SK-N-SH (cell line): ENCODE measurements at regions of chr7 and their contacts with region 1.

Region 1: GRCh38 chr7:133742709-133743538 is 384.2 kb upstream of the LRGUK start:
- DNase-seq: peak; percentile 36
- H3K4me3 ChIP-seq: no peak overlapping the region
- H3K27ac ChIP-seq: peak overlapping the region; percentile 10 to 100; a peak in 3 of 4 replicates
- H3K4me1 ChIP-seq: peaks cover 14 to 80% of the 10 kb centered on the region in 2 experiments; a peak in 3 of 4 replicates
- H3K27me3 ChIP-seq: no peaks in the 10 kb centered on the region
- CTCF ChIP-seq: peak; percentile 95
- EP300 ChIP-seq: peak; percentile 49 to 89; a peak in 3 of 4 replicates
- RAD21 ChIP-seq: peak; percentile 95

Region 2: GRCh38 chr7:133009426-133010252 is 733.3 kb before region 1 on chr7:
- CTCF ChIA-PET with region 1: no interaction called
- POLR2A ChIA-PET with region 1: no interaction called
- DNase-seq: no peak
- H3K4me3 ChIP-seq: no peak overlapping the region
- H3K27ac ChIP-seq: no peak overlapping the region
- H3K4me1 ChIP-seq: peaks cover 4 to 9% of the 10 kb centered on the region in 2 experiments; a peak in 3 of 4 replicates
- H3K27me3 ChIP-seq: no peaks in the 10 kb centered on the region
- CTCF ChIP-seq: no peak
- EP300 ChIP-seq: no peak
- RAD21 ChIP-seq: no peak

Region 3: GRCh38 chr7:133542209-133542780 is 200.6 kb before region 1 on chr7:
- CTCF ChIA-PET with region 1: interaction called, 10 read pairs
- POLR2A ChIA-PET with region 1: no interaction called
- DNase-seq: no peak
- H3K4me3 ChIP-seq: no peak overlapping the region
- H3K27ac ChIP-seq: peak overlapping the region in 1 of 2 experiments; percentile 97; a peak in 2 of 4 replicates
- H3K4me1 ChIP-seq: peaks cover 3 to 48% of the 10 kb centered on the region in 2 experiments; a peak in 3 of 4 replicates
- H3K27me3 ChIP-seq: no peaks in the 10 kb centered on the region
- CTCF ChIP-seq: no peak
- EP300 ChIP-seq: no peak
- RAD21 ChIP-seq: no peak

Region 4: DNA sequence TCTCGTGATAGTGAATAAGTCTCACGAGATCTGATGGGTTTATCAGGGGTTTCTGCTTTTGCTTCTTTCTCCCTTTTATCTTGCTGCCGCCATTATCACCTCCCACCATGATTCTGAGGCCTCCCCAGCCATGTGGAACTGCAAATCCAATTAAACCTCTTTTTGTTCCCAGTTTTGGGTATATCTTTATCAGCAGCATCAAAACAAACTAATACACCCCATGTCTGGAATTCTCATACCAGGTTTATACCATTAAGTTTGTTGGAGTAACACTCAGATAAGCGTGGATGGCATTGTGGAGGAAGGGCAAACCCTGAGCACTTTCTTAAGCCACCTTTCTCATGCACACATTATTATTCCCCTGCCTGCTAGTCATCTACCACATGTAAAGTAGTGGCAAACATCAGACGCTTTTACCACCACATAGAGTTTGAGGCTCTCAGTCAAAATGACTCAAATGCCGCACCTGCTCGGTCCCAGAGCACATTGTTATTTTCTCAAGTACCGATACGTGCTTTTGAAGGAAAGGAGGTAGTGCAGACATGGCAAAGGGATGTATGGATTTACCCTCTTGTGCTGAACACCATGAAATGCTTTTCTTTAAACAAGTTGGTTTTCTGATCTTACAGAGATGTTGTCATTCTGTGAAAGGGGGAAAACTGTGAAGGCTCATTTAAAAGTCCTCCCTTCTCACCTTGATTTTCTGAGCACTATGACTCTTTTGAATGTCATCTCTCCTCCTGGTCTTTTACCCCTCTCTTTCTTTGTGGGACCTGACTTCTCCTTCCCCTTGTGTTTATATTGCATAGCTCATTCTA is 60.4 kb before region 1 on chr7:
- CTCF ChIA-PET with region 1: interaction called, 15 read pairs
- POLR2A ChIA-PET with region 1: no interaction called
- DNase-seq: no peak
- H3K4me3 ChIP-seq: no peak overlapping the region
- H3K27ac ChIP-seq: peak overlapping the region in 1 of 2 experiments; percentile 94; a peak in 2 of 4 replicates
- H3K4me1 ChIP-seq: peaks cover 0 to 35% of the 10 kb centered on the region in 2 experiments; a peak in 2 of 4 replicates
- H3K27me3 ChIP-seq: no peaks in the 10 kb centered on the region
- CTCF ChIP-seq: no peak
- EP300 ChIP-seq: peak in 1 of 2 experiments; percentile 81; a peak in 2 of 4 replicates
- RAD21 ChIP-seq: peak; percentile 5; the same call in 1 of the 2 replicates

Region 5: DNA sequence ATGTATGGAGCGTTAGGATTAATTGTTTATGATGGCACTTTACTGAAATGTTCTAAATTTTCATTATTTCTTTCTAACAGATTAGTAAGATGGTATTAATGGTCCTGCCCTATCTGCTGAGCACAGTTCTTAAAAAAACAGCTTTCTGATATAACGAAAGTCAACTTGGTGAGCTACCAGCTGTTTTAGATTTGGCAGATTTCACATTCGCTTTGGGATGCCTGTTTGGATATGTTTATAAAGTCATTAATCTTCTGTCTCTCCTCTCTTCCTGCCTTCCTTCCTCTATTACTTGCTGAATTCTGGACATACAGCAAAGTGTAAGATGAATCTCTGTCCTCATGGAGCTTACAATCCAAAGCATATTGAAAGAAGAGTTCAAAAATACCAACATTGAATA is 12.6 kb before region 1 on chr7:
- CTCF ChIA-PET with region 1: interaction called, 30 read pairs
- POLR2A ChIA-PET with region 1: no interaction called
- DNase-seq: no peak
- H3K4me3 ChIP-seq: no peak overlapping the region
- H3K27ac ChIP-seq: peak overlapping the region in 1 of 2 experiments; percentile 93; a peak in 2 of 4 replicates
- H3K4me1 ChIP-seq: peaks cover 0 to 13% of the 10 kb centered on the region in 2 experiments; a peak in 2 of 4 replicates
- H3K27me3 ChIP-seq: no peaks in the 10 kb centered on the region
- CTCF ChIP-seq: no peak
- EP300 ChIP-seq: peak in 1 of 2 experiments; percentile 55; a peak in 1 of 4 replicates
- RAD21 ChIP-seq: no peak; the same call in 1 of the 2 replicates

Region 6: DNA sequence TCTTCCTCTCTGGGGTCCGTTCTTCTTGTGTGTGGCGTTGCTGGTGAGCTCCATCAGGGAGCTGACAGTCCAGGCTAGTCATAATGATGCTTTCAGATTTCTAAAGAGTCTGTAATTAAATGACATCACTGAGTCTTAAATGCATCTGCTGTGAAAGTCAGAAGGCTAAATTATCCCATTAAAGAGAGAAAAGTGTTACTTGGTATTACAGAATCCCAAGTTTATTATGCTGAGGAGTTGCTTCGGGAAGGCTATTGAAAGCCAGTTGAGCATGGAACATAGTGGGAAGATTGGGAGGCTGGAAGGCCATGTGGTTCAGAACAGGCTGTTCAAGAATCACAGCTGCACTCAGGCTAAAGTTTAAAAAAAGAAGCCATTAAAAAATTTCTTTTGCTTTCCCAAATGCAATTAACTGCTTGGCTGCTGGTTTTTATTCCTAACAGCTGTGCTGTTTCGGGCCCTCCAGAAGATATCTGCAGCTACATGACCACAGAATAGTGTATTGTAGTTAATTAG is 41.6 kb after region 1 on chr7:
- CTCF ChIA-PET with region 1: interaction called, 48 read pairs
- POLR2A ChIA-PET with region 1: interaction called, 23 read pairs
- DNase-seq: peak; percentile 66
- H3K4me3 ChIP-seq: no peak overlapping the region
- H3K27ac ChIP-seq: peak overlapping the region in 1 of 2 experiments; percentile 100; a peak in 3 of 4 replicates
- H3K4me1 ChIP-seq: peaks cover 0 to 57% of the 10 kb centered on the region in 2 experiments; a peak in 2 of 4 replicates
- H3K27me3 ChIP-seq: no peaks in the 10 kb centered on the region
- CTCF ChIP-seq: no peak
- EP300 ChIP-seq: peak in 1 of 2 experiments; percentile 99; a peak in 2 of 4 replicates
- RAD21 ChIP-seq: peak; percentile 54

Region 7: DNA sequence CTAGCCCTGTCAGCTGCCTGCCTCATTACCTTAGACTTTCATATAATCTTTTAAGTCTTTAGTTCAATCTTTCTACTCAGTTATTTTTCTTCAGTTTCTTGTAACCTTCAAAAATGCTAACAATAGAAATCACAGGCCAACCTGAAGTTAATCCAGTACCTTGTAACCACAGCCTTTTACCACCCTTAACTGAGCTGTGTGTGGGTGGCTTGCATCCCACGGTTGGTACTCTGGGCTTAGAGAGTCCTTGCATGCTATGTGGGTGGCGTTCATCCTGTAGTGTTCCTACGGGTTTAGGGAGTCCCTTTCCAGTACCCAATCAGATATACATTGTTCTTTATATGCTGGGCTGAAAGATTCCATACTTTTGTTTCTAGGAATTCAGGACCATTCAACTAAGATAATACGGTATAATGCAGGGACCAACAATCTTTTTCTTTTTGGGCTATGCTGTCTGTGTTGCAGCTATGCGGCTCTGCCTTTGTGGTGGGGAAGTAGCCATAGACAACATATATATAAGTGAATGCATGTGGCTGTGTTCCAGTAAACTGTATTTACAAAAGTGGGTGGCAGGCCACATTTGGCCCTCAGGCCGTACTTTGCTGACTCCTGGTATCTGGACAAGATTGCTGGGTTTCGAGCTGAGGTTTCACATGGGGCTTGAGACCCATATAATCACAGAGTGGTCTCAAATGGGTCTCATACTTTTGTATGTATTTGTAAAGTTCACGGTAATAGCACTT is 103.5 kb after region 1 on chr7:
- CTCF ChIA-PET with region 1: interaction called, 62 read pairs
- POLR2A ChIA-PET with region 1: interaction called, 6 read pairs
- DNase-seq: peak; percentile 67
- H3K4me3 ChIP-seq: no peak overlapping the region
- H3K27ac ChIP-seq: peak overlapping the region in 1 of 2 experiments; percentile 99; a peak in 2 of 4 replicates
- H3K4me1 ChIP-seq: peaks cover 5 to 27% of the 10 kb centered on the region in 2 experiments
- H3K27me3 ChIP-seq: no peaks in the 10 kb centered on the region
- CTCF ChIP-seq: no peak
- EP300 ChIP-seq: peak in 1 of 2 experiments; percentile 94; a peak in 2 of 4 replicates
- RAD21 ChIP-seq: peak; percentile 37; the same call in 1 of the 2 replicates